ENCODE measurements at regions of chr1 and their contacts with region 1.

Region 1: DNA sequence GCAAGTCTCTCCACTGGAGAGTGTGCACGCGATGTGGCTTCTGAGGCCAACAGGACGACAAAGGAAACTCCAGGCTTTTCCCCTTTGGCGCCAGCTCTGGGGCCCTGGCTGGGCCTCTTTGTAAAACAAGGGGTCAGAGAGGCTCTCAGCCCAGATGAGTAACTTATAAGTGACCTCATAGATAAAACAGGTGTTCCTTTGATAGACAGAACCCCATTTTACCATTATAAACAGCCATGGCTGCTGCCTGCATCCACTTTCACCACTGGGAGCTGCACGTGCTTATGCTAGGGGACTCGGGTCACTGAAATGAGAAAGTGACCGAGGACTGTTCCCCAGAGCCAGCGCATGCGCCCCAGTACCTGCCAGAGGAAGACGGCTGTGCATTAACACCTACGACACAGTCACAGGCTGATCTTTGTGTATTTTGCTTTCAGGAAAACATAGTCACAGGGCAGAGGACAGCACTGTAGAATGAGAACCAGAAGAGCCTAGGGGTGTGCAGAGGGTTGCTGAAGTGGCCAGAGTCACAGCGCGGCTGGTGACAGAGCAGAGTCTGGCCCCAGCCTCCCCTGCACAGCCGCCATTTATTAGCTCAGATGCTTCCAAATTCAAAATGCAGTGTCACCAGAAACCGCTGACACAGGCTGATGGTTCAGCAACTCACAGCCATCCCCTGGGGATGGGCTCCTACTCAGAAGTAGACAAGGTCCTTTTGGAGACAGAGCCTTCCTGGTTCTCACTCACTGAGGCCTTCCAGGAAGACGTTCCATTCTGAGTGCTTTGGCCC is 12.7 kb downstream of the RNF207 start:
- DNase-seq: no peak
- H3K4me3 ChIP-seq: no peak overlapping the region
- H3K27ac ChIP-seq: no peak overlapping the region
- H3K4me1 ChIP-seq: no peaks in the 10 kb centered on the region
- H3K27me3 ChIP-seq: no peaks in the 10 kb centered on the region
- CTCF ChIP-seq: no peak
- POLR2A ChIP-seq: no peak

Region 2: DNA sequence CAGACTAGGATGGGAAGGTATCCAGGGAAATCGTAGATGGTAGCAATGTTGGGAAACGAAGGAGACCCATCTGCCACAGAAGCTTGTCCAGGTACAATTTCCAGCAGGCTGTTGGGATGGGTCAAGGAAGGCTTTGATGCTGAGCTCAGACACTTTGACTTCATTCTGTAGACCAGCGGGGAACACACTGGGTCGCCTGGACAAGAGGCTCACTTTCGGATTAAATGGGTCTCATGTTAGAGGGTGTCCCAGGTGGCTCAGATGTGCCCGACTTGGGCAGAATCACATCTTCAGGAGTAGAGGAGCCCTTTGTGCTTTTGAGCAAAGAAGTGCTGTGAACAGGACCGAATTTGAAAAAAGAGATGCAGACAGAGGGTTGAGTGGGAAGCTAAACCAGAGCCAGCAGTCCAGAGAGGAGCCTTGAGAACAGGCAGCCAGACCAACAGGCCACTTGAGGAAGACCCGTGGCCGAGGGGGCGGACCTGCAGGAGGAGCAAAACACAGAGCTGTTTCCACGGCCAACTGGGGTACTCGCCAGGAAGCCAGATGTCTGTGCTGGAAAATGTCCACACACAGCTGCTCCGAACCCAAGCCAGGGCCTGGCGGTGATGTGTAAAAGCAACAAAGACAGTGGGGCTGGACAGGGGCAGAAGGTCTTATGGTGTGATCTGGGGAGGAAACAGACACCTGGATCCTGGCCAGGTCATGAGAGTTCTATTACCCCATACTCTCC is 1417.2 kb before region 1 on chr1:
- intact Hi-C with region 1: loop called (anchors 5 kb)
- DNase-seq: peak in 1 of 2 donors; percentile 35
- H3K4me3 ChIP-seq: no peak overlapping the region
- H3K27ac ChIP-seq: peak overlapping the region in 1 of 2 donors; percentile 3
- H3K4me1 ChIP-seq: no peaks in the 10 kb centered on the region
- H3K27me3 ChIP-seq: peaks cover 0 to 6% of the 10 kb centered on the region in 2 donors
- CTCF ChIP-seq: no peak
- POLR2A ChIP-seq: no peak

Region 3: DNA sequence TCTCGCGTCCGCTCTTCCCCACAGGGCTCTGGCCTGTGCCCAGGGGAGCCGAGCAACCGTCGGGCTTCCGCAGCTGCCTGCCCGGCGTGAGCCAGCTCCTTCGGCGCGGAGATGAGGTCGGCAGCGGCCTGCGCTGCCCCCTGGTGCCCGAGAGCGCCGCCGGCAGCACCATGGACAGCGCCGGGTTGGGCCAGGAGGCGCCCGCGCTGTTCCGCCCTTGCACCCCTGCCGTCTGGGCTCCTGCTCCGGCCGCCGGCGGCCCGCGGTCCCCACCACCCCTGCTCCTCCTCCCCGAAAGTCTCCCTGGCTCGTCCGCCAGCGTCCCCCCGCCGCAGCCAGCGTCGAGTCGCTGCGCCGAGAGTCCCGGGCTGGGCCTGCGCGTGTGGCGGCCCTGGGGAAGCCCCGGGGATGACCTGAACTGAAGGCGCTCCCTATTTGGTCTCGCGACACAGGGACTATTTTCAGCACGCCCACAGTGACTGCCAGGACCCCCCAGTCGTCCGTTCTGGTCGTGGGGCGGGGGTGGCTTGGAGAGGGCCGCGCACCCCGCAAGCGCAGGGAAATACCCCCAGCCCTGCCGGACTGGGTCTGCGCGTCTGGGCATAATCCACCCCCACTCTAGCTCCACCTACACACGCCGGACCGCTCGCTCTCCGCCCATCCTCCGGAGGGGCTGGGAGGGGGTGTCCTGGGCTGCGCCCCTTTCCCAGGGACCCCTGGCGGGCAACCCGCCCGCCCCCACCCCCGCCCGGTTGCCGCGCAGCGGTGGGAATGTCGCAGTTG is 26.7 kb after region 1 on chr1:
- intact Hi-C with region 1: no loop called
- DNase-seq: peak in 1 of 2 donors; percentile 75
- H3K4me3 ChIP-seq: no peak overlapping the region
- H3K27ac ChIP-seq: no peak overlapping the region
- H3K4me1 ChIP-seq: peaks cover 8 to 10% of the 10 kb centered on the region in 2 donors
- H3K27me3 ChIP-seq: peaks cover 31 to 83% of the 10 kb centered on the region in 2 donors
- CTCF ChIP-seq: peak; percentile 54 to 86 (median 55)
- POLR2A ChIP-seq: no peak